ENCODE measurements at regions of chr6 and their contacts with region 1.

Region 1: DNA sequence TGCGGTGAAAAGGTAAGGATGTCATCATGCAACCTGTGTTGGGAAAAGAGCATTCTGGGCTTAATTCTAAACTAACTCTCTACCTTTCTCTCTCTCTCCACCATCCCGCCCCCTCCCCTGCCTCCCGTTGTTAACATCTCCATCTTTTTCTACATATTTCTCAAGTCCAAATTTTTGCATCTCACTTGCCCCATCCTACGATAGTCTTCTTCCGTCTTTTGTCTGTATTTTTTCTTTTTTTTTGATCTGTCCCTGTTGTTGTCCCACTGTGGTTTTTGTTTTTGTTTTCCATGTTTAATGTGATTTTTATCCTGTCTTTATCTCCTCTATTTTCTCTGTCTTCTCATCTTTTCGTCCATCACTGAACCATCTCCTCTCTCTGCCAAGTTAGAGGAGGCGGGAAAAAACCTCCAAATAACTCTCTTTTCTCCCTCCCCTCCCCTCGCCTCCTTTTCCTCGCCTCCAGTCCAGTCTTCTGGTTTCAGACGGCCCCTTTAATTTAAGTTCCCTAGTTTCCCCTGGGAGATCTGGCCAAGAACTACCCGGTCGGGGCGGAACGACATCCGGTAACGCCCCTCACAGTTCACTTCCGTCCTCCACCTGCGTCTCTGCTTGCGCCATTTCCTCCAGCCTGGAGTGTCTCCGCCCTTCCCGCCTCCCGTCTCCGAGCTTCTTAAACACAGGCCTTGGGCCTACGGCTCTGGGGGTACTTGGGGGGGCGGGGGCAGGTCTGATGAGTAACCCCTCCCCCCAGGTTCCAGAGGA is at the start of gene NFKBIL1:
- DNase-seq: peak; percentile 84 to 95 (median 92)
- ATAC-seq: peak; percentile 94 to 97 (median 94)
- H3K4me3 ChIP-seq: peak within 1 kb of the TSS; percentile 13 to 41 (median 36)
- H3K27ac ChIP-seq: peak within 1 kb of the TSS; percentile 28 to 79 (median 45)
- H3K4me1 ChIP-seq: peaks cover 11 to 17% (median 16%) of the 10 kb centered on the region in 3 donors
- H3K27me3 ChIP-seq: no peaks in the 10 kb centered on the region
- CTCF ChIP-seq: peak in 1 of 4 donors; percentile 10
- total RNA-seq, gene NFKBIL1: 12.1 to 25.3 (median 20.8) TPM

Region 2: GRCh38 chr6:31597006-31597405 is 49.9 kb after region 1 on chr6:
- intact Hi-C with region 1: loop called in 2 of 3 experiments (anchors 5 kb)
- DNase-seq: no peak
- ATAC-seq: peak in 2 of 4 donors; percentile 44 to 52
- H3K4me3 ChIP-seq: no peak overlapping the region
- H3K27ac ChIP-seq: no peak overlapping the region
- H3K4me1 ChIP-seq: no peaks in the 10 kb centered on the region
- H3K27me3 ChIP-seq: no peaks in the 10 kb centered on the region
- CTCF ChIP-seq: no peak